Heart right ventricle (tissue), 16 donors: ENCODE measurements at regions of chr2 and their contacts with region 1.

Region 1: DNA sequence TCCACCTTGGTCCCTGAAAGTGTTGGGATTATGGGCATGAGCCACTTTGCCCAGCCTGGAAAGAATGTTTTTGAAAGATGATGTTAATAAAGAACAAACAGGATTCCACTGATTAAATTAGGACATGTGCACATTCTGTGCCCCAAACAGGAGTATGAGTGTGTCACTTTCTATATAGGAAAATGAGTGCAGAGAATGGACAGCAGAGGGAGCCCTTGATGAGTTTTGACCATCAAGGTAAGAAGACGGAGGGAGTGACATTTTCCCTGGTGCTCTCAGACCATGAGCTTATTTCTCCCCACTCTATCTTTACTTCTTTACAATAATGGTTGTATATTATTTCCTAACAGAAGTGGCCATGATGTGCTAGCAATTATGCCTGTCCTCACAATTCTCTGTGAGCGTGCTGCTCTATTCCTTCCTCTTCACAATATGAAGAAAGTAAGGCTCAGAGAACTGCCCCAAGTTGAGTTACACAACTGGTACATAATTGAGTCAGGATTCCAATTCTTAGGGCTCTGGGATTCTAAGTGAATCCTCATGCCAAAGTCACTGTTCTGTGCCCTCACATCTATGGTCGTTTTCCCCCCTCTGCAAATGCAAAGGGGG is 20.6 kb downstream of the RPL37A start:
- DNase-seq: peak in 1 of 2 donors; percentile 86
- ATAC-seq: peak; percentile 63 to 89 (median 87)
- H3K4me3 ChIP-seq: no peak overlapping the region
- H3K27ac ChIP-seq: no peak overlapping the region
- H3K4me1 ChIP-seq: peaks cover 0 to 10% (median 5%) of the 10 kb centered on the region in 9 donors
- H3K27me3 ChIP-seq: no peaks in the 10 kb centered on the region
- CTCF ChIP-seq: peak; percentile 69 to 91 (median 81)

Region 2: GRCh38 chr2:216578325-216578724 is 59.1 kb after region 1 on chr2:
- intact Hi-C with region 1: loop called in 1 of 10 experiments (anchors 5 kb)
- DNase-seq: no peak
- ATAC-seq: no peak
- H3K4me3 ChIP-seq: no peak overlapping the region
- H3K27ac ChIP-seq: no peak overlapping the region
- H3K4me1 ChIP-seq: peaks cover 0 to 14% (median 11%) of the 10 kb centered on the region in 9 donors
- H3K27me3 ChIP-seq: no peaks in the 10 kb centered on the region
- CTCF ChIP-seq: no peak

Region 3: GRCh38 chr2:216590780-216591179 is 71.5 kb after region 1 on chr2:
- intact Hi-C with region 1: loop called in 1 of 10 experiments (anchors 5 kb)
- DNase-seq: peak; percentile 23 to 43
- ATAC-seq: peak; percentile 45 to 94 (median 68)
- H3K4me3 ChIP-seq: no peak overlapping the region
- H3K27ac ChIP-seq: peak overlapping the region in 3 of 10 donors; percentile 1 to 41 (median 33)
- H3K4me1 ChIP-seq: peaks cover 2 to 25% (median 15%) of the 10 kb centered on the region in 9 donors
- H3K27me3 ChIP-seq: no peaks in the 10 kb centered on the region
- CTCF ChIP-seq: peak in 4 of 9 donors; percentile 13 to 36 (median 32)

Region 4: DNA sequence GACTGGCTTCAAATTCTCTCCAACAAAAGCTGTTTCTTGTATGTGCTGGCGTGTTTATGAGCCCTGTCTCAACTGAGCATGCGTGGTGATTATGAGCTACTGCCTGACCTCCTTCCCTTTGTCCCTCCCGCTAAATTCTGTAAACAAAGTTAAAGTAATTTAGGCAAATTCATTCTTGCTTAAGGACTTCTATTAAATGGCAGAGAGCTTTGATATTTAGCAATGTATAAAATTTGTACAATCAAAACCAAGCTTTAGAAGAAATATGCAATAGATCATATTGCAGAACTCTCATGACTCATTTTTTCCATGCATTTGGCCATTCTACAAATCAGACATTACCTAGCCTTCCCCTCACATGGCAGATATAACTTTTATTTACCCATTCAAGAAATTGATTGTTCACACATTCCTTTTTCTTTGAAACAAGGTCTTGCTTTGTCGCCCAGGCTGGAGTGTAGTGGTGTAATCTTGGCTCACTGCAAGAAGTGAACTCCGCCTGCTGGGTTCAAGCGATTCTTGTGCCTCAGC is 132.2 kb after region 1 on chr2:
- intact Hi-C with region 1: no loop called
- DNase-seq: no peak
- ATAC-seq: no peak
- H3K4me3 ChIP-seq: no peak overlapping the region
- H3K27ac ChIP-seq: no peak overlapping the region
- H3K4me1 ChIP-seq: peaks cover 0 to 36% (median 7%) of the 10 kb centered on the region in 9 donors
- H3K27me3 ChIP-seq: no peaks in the 10 kb centered on the region
- CTCF ChIP-seq: no peak

Region 5: GRCh38 chr2:216666461-216667233 is 147.4 kb after region 1 on chr2:
- intact Hi-C with region 1: loop called (anchors 1 to 2 kb)
- DNase-seq: peak; percentile 54 to 65
- ATAC-seq: peak; percentile 57 to 87 (median 68)
- H3K4me3 ChIP-seq: no peak overlapping the region
- H3K27ac ChIP-seq: no peak overlapping the region
- H3K4me1 ChIP-seq: peaks cover 0 to 22% (median 20%) of the 10 kb centered on the region in 9 donors
- H3K27me3 ChIP-seq: no peaks in the 10 kb centered on the region
- CTCF ChIP-seq: peak; percentile 95 to 100 (median 98)

Region 6: GRCh38 chr2:217743966-217744761 is 1224.9 kb after region 1 on chr2:
- intact Hi-C with region 1: loop called in 1 of 10 experiments (anchors 10 kb)
- DNase-seq: peak; percentile 32 to 55
- ATAC-seq: peak; percentile 20 to 60 (median 40)
- H3K4me3 ChIP-seq: no peak overlapping the region
- H3K27ac ChIP-seq: peak overlapping the region in 3 of 10 donors; percentile 30 to 43 (median 34)
- H3K4me1 ChIP-seq: peaks cover 0 to 36% (median 9%) of the 10 kb centered on the region in 9 donors
- H3K27me3 ChIP-seq: no peaks in the 10 kb centered on the region
- CTCF ChIP-seq: no peak

Region 7: DNA sequence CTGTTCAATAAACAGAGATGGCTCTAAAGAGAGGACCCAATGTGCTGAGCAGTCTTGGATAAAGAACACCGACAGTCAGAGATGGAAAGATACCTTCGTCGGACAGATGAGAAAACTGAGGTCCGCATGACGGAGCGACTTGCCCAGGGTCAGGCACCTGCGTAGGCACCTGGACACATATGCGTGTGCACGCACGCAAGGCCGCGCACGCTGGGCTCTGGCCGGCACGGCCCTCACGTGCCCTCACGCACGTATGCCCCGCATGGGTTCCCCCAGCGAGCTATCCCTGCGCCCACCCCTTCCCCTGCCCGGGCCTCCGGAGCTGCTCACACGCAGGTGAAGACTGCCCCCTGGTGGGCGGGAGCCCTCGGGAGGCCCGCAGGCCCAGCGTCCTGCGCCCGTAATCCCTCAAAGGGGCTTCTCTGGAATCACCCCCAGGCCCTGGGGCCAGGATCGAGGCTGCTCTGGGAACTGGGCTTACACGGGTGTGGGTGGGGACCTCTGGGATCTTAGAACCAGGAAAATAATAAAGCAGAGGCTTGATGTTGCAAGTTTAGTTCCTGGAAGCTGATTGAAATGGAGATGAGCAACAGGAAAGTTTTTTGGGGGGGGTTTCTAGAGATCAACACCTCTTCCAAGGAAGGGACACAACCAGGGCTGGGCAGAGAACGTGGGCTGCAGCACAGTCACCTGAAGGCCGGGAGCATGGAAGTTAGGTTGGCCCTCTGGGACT is 1237.3 kb after region 1 on chr2:
- intact Hi-C with region 1: loop called in 2 of 10 experiments (anchors 5 to 10 kb)
- DNase-seq: peak; percentile 72 to 78
- ATAC-seq: peak; percentile 75 to 91 (median 88)
- H3K4me3 ChIP-seq: peak overlapping the region in 6 of 10 donors; percentile 9 to 40 (median 31)
- H3K27ac ChIP-seq: no peak overlapping the region
- H3K4me1 ChIP-seq: peaks cover 5 to 22% (median 10%) of the 10 kb centered on the region in 9 donors
- H3K27me3 ChIP-seq: peaks cover 0 to 8% (median 0%) of the 10 kb centered on the region in 7 donors
- CTCF ChIP-seq: peak; percentile 90 to 99 (median 94)